Activated T-helper 1 cell treated with anti-CD3 and anti-CD28 coated beads, Interleukin-12 subunit alpha, Interleukin-12 subunit beta, Interleukin-2, Interleukin-4 antibody, amounts not matched to agents 30 ng/mL and 10 ng/mL and 1 ng/mL, durations not matched to agents 14 hours and 24 hours and 36 hours (primary cell): ENCODE measurements at regions of chrX and their contacts with region 1.

Region 1: DNA sequence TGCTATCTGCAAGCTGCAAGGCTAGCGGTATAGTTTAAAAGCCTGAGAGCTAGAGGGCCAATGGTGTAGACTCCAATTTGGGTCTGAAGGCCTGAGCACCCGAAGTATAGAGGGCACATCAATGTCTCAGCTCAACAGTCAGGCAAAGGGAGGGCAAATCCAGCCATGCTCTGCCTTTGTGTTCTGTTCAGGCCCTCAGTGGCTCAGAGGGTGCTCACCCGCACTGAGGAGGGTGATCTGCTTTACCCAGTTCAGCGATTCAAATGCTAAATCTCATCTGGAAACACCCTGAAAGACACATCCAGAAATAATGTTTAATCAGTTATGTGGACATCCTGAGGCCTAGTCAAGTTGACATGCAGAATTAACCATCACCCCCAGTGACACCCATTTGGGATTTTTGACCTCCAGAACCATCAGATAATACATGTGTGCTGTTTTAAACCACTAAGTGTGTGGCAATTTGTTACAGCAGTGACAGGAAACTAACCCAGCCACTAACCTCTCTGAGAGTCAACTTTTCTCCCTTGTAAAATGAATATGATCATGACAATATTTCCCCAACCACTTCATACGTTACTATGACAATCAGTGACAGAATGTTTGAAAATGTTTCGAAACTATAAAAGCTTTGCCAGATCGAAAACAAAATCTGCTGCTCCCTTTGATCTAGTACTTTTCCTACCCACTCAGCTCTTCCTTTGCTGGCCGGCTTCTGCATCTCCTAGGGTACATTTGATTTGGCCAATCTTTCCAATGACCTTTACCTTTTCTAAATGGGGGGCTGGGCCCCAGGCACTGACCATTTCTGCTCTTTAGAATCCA is 8.4 kb upstream of the TBL1X start:
- DNase-seq: peak; percentile 26
- H3K4me3 Mint-ChIP-seq: peak overlapping the region; percentile 23
- H3K27ac Mint-ChIP-seq: peak overlapping the region; percentile 91
- H3K4me1 Mint-ChIP-seq: peaks cover 27% of the 10 kb centered on the region
- H3K27me3 Mint-ChIP-seq: no peaks in the 10 kb centered on the region

Region 2: DNA sequence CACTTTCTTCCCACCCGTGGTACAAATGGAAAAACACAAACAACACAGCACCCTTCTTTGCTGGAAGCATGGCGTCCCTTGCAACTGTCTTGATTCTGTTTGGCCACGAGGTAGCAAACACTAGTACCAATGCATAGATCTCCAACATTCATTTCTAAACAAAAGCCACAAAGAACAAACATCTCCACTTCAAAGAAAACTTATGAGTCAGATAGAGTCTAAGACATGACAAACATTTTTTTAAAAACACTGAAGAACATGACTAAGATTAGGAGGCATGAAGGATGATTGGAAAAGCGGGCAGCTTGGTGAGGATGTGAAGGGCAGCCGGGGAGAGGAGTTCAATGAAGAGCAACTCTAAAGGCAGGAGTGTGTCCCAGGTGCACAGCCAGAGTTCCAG is 225.0 kb before region 1 on chrX:
- intact Hi-C with region 1: loop called (anchors 2 kb)
- DNase-seq: no peak
- H3K4me3 Mint-ChIP-seq: no peak overlapping the region
- H3K27ac Mint-ChIP-seq: peak overlapping the region; percentile 52
- H3K4me1 Mint-ChIP-seq: peaks cover 14% of the 10 kb centered on the region
- H3K27me3 Mint-ChIP-seq: peaks cover 2% of the 10 kb centered on the region

Region 3: DNA sequence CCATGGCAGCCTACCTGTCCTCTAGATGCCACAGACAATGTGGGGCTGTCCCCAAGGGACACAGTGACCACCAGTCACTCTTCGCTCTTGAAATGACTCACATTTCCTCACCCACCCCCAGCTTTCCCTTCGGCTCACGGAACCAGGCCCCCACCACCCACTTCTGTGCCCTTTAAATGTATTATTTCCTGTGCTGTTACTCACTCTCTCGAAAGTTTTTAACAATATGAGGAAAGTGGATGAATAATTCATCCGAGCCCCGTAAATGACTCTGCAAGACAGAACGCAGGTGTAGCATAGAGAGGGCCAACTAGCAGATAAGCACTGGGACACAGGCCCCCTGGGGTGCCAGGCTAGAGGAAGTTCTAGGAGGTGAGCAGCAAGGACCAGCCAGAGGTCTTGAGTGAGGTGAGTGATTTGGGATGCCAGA is 171.1 kb before region 1 on chrX:
- intact Hi-C with region 1: loop called (anchors 1 kb)
- DNase-seq: peak; percentile 14
- H3K4me3 Mint-ChIP-seq: peak overlapping the region; percentile 37
- H3K27ac Mint-ChIP-seq: peak overlapping the region; percentile 94
- H3K4me1 Mint-ChIP-seq: peaks cover 38% of the 10 kb centered on the region
- H3K27me3 Mint-ChIP-seq: peaks cover 3% of the 10 kb centered on the region

Region 4: GRCh38 chrX:9379697-9380551 is 76.5 kb before region 1 on chrX:
- intact Hi-C with region 1: no loop called
- DNase-seq: no peak
- H3K4me3 Mint-ChIP-seq: no peak overlapping the region
- H3K27ac Mint-ChIP-seq: no peak overlapping the region
- H3K4me1 Mint-ChIP-seq: peaks cover 21% of the 10 kb centered on the region
- H3K27me3 Mint-ChIP-seq: peaks cover 3% of the 10 kb centered on the region

Region 5: GRCh38 chrX:9622128-9622527 is 165.7 kb after region 1 on chrX:
- intact Hi-C with region 1: loop called (anchors 5 kb)
- DNase-seq: no peak
- H3K4me3 Mint-ChIP-seq: no peak overlapping the region
- H3K27ac Mint-ChIP-seq: no peak overlapping the region
- H3K4me1 Mint-ChIP-seq: peaks cover 31% of the 10 kb centered on the region
- H3K27me3 Mint-ChIP-seq: peaks cover 2% of the 10 kb centered on the region

Region 6: DNA sequence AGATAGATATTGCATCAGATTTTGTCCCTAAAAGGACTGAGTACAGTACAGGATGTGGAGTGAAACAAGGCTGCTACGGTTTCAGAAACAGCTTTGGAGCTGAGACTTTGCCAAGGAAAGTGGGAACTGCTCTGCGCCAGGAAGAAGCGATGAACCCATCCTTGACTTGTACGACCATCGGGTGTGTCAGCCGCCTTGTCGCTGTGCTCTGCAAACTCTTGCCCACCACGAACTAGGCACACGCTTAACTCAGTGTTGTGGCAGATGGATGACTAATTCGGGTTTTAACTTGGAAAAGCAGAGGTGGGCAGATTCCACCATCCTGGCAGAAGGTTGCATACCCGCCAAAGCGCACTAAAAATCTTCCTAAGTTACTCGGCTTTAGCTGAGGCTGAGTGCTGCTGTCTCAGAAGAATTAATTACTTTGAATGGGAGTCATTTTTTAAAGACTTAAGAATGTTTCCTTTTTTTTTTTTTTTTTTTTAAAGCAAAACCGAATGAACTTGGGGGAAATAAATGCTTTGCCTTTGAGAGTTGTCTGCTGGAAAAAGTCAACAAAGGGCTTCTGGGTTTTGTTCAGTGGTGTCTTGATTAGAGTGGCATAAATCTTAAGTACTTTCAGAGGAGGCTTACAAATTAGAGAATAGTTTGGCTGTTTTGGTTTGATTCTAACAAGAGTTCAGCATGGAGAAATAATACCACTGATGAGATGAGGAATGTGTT is 399.3 kb after region 1 on chrX:
- intact Hi-C with region 1: no loop called
- DNase-seq: no peak
- H3K4me3 Mint-ChIP-seq: no peak overlapping the region
- H3K27ac Mint-ChIP-seq: no peak overlapping the region
- H3K4me1 Mint-ChIP-seq: no peaks in the 10 kb centered on the region
- H3K27me3 Mint-ChIP-seq: peaks cover 7% of the 10 kb centered on the region